ENCODE measurements at regions of chr18 and their contacts with region 1.

Region 1: DNA sequence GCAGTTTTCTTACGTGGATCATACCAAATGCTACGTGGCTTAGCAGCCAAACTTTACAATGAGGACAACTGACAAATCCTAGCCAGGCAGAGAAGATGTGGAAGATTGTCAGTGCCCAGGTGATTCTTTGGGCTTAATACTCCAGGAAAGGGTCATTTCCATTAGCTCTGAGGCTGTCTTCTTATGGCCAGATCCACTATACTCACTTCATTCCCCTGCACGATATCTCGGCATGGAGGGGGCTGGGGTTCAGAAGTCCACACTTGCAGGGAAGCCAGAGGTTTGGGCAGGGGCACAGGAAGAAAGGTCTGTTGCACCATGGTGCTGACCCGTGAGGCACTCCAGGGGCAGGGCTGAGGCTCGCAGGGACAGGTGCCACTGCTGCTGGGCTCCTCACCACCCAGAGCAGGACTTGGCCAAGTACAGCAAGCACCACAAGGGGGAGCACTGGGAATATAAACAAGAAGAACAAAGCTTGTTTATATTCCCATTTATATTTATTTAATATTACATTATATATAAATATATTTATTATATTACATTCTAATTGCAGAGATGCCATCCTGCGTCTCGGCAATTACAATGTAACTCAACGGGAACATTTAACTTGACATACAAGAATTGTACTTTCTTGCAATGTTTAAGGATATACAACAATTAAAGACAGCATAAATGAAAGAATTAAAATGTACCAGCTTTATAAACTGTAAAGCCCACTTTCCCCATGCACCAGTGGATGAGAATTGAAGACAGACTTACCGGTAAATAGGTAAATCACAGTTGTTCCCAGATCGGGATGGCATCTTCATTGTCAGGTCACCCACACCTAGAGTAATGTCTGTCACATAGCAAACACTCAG is 27.2 kb downstream of the CLUL1 start:
- DNase-seq: peak; percentile 10 to 59 (median 37)
- ATAC-seq: peak; percentile 78
- H3K4me3 ChIP-seq: no peak overlapping the region
- H3K4me3 Mint-ChIP-seq: no peak overlapping the region
- H3K27ac ChIP-seq: no peak overlapping the region
- H3K27ac Mint-ChIP-seq: no peak overlapping the region
- H3K4me1 ChIP-seq: no peaks in the 10 kb centered on the region
- H3K4me1 Mint-ChIP-seq: peaks cover 0 to 2% (median 0%) of the 10 kb centered on the region in 7 donors
- H3K27me3 ChIP-seq: no peaks in the 10 kb centered on the region
- H3K27me3 Mint-ChIP-seq: peaks cover 0 to 48% (median 5%) of the 10 kb centered on the region in 5 donors

Region 2: GRCh38 chr18:658001-658946 is 34.3 kb after region 1 on chr18:
- CTCF ChIA-PET with region 1: no interaction called
- POLR2A ChIA-PET with region 1: no interaction called
- intact Hi-C with region 1: loop called in 1 of 2 experiments (anchors 2 kb)
- DNase-seq: peak in 3 of 9 donors; percentile 20 to 78 (median 31)
- ATAC-seq: peak; percentile 68
- H3K4me3 ChIP-seq: peak overlapping the region; percentile 79
- H3K4me3 Mint-ChIP-seq: peak overlapping the region; percentile 81 to 96 (median 83)
- H3K27ac ChIP-seq: no peak overlapping the region
- H3K27ac Mint-ChIP-seq: peak overlapping the region in 1 of 9 donors; percentile 94
- H3K4me1 ChIP-seq: peaks cover 0 to 5% of the 10 kb centered on the region in 2 donors
- H3K4me1 Mint-ChIP-seq: peaks cover 0 to 50% (median 10%) of the 10 kb centered on the region in 7 donors
- H3K27me3 ChIP-seq: peaks cover 0 to 5% of the 10 kb centered on the region in 2 donors
- H3K27me3 Mint-ChIP-seq: peaks cover 0 to 43% (median 35%) of the 10 kb centered on the region in 5 donors

Region 3: GRCh38 chr18:741931-742512 is 118.0 kb after region 1 on chr18:
- CTCF ChIA-PET with region 1: no interaction called
- POLR2A ChIA-PET with region 1: no interaction called
- intact Hi-C with region 1: loop called in 1 of 2 experiments (anchors 2 kb)
- DNase-seq: peak in 7 of 9 donors; percentile 27 to 58 (median 49)
- ATAC-seq: peak; percentile 88
- H3K4me3 ChIP-seq: no peak overlapping the region
- H3K4me3 Mint-ChIP-seq: no peak overlapping the region
- H3K27ac ChIP-seq: no peak overlapping the region
- H3K27ac Mint-ChIP-seq: peak overlapping the region in 2 of 9 donors; percentile 38 to 51
- H3K4me1 ChIP-seq: no peaks in the 10 kb centered on the region
- H3K4me1 Mint-ChIP-seq: peaks cover 0 to 10% (median 4%) of the 10 kb centered on the region in 7 donors
- H3K27me3 ChIP-seq: no peaks in the 10 kb centered on the region
- H3K27me3 Mint-ChIP-seq: no peaks in the 10 kb centered on the region

Region 4: GRCh38 chr18:811182-811891 is 187.3 kb after region 1 on chr18:
- CTCF ChIA-PET with region 1: no interaction called
- POLR2A ChIA-PET with region 1: no interaction called
- intact Hi-C with region 1: no loop called
- DNase-seq: peak in 2 of 9 donors; percentile 13
- ATAC-seq: no peak
- H3K4me3 ChIP-seq: peak overlapping the region; percentile 60
- H3K4me3 Mint-ChIP-seq: peak overlapping the region; percentile 93 to 99 (median 96)
- H3K27ac ChIP-seq: peak overlapping the region; percentile 94
- H3K27ac Mint-ChIP-seq: peak overlapping the region; percentile 89 to 98 (median 95)
- H3K4me1 ChIP-seq: peaks cover 35 to 36% of the 10 kb centered on the region in 2 donors
- H3K4me1 Mint-ChIP-seq: peaks cover 43 to 82% (median 78%) of the 10 kb centered on the region in 7 donors
- H3K27me3 ChIP-seq: no peaks in the 10 kb centered on the region
- H3K27me3 Mint-ChIP-seq: peaks cover 0 to 6% (median 0%) of the 10 kb centered on the region in 5 donors

Region 5: DNA sequence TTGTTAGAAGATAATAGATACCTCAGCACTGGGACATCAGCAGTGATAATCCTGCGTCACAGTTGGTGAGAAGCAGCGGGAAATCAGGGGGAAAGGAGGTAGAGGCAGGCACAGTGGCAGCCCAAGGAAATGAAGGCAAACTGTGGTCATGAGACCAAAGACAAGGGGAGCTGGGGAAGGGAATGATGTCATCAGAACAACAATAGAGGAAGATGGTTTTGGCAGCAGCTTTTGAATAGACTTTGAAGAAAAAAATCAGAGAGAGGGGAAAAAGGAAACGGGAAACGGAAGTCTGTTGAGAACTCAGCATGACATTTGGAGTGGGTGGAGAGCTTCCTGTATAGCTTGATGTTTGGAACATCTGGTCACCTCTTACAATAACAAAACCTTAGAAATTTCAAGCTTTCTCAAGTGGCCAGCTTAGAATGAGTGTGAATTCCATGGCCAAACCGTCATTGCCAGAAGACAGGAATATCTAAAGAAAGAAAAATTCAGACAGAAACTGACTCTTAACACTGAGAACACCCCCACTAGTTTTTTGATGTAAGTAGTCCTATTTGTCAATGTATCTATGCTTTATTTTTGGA is 206.4 kb after region 1 on chr18:
- CTCF ChIA-PET with region 1: interaction called, 14 read pairs
- POLR2A ChIA-PET with region 1: no interaction called
- intact Hi-C with region 1: loop called (anchors 1 kb)
- DNase-seq: peak in 7 of 9 donors; percentile 74 to 88 (median 85)
- ATAC-seq: peak; percentile 89
- H3K4me3 ChIP-seq: peak overlapping the region; percentile 6
- H3K4me3 Mint-ChIP-seq: peak overlapping the region; percentile 44 to 77 (median 66)
- H3K27ac ChIP-seq: peak overlapping the region; percentile 54
- H3K27ac Mint-ChIP-seq: peak overlapping the region; percentile 32 to 91 (median 77)
- H3K4me1 ChIP-seq: peaks cover 15 to 22% of the 10 kb centered on the region in 2 donors
- H3K4me1 Mint-ChIP-seq: peaks cover 10 to 40% (median 36%) of the 10 kb centered on the region in 7 donors
- H3K27me3 ChIP-seq: no peaks in the 10 kb centered on the region
- H3K27me3 Mint-ChIP-seq: peaks cover 0 to 11% (median 0%) of the 10 kb centered on the region in 5 donors

Region 6: DNA sequence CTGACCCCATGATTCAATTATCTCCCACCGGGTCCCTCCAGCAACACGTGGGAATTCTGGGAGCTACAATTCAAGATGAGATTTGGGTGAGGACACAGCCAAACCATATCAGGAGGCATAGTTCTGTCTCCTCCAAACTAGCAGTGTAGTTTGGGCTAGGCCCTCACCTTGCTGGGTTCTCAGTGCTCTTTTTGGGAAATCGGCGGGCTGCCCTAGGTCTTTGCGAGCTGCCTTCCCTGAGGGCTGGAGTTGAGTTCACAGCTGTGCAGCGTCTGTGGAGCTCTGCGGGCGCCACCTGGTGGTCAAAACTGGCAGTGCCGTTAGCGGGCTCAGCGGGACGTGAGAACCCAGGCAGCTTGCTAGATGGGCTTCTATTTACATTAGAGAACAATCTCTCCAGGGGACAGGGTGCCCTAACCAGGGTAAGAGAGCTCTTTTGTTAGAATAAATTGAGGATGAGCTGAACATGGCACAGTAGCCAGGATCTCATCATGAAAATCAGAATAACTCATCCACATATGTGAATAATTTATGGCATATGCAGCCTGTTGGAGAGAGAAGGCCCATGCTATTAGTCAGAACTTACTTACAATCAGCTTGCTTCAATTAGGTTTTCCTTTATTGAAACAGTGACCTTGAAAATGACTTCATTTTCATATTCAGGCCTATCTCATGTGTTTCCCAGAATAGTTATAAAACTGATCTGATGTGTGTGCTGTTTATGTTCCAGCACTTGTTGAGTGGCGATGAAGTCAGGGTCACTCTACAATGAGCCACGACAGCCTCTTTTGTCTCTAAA is 215.4 kb after region 1 on chr18:
- CTCF ChIA-PET with region 1: interaction called, 11 read pairs
- POLR2A ChIA-PET with region 1: interaction called, 4 read pairs
- intact Hi-C with region 1: loop called in 1 of 2 experiments (anchors 2 kb)
- DNase-seq: peak; percentile 55 to 89 (median 80)
- ATAC-seq: peak; percentile 98
- H3K4me3 ChIP-seq: no peak overlapping the region
- H3K4me3 Mint-ChIP-seq: peak overlapping the region in 1 of 10 donors; percentile 15
- H3K27ac ChIP-seq: no peak overlapping the region
- H3K27ac Mint-ChIP-seq: peak overlapping the region in 2 of 9 donors; percentile 19 to 43
- H3K4me1 ChIP-seq: peaks cover 0 to 4% of the 10 kb centered on the region in 2 donors
- H3K4me1 Mint-ChIP-seq: peaks cover 0 to 16% (median 4%) of the 10 kb centered on the region in 7 donors
- H3K27me3 ChIP-seq: no peaks in the 10 kb centered on the region
- H3K27me3 Mint-ChIP-seq: peaks cover 0 to 18% (median 7%) of the 10 kb centered on the region in 5 donors

Region 7: GRCh38 chr18:961644-962355 is 337.8 kb after region 1 on chr18:
- CTCF ChIA-PET with region 1: no interaction called
- POLR2A ChIA-PET with region 1: no interaction called
- intact Hi-C with region 1: loop called in 1 of 2 experiments (anchors 10 kb)
- DNase-seq: peak in 7 of 9 donors; percentile 11 to 50 (median 34)
- ATAC-seq: peak; percentile 27
- H3K4me3 ChIP-seq: peak overlapping the region; percentile 21
- H3K4me3 Mint-ChIP-seq: peak overlapping the region in 8 of 10 donors; percentile 3 to 63 (median 36)
- H3K27ac ChIP-seq: no peak overlapping the region
- H3K27ac Mint-ChIP-seq: no peak overlapping the region
- H3K4me1 ChIP-seq: peaks cover 0 to 3% of the 10 kb centered on the region in 2 donors
- H3K4me1 Mint-ChIP-seq: peaks cover 0 to 10% (median 6%) of the 10 kb centered on the region in 7 donors
- H3K27me3 ChIP-seq: no peaks in the 10 kb centered on the region
- H3K27me3 Mint-ChIP-seq: peaks cover 25 to 39% (median 29%) of the 10 kb centered on the region in 5 donors

Measured in naive thymus-derived CD4-positive, alpha-beta T cell (primary cell).